ENCODE measurements at regions of chr11 and their contacts with region 1.

Region 1: GRCh38 chr11:88281317-88281712 is 56.2 kb downstream of the CTSC start:
- DNase-seq: no peak
- H3K4me3 ChIP-seq: no peak overlapping the region
- H3K27ac ChIP-seq: no peak overlapping the region
- H3K4me1 ChIP-seq: peaks cover 6% of the 10 kb centered on the region
- H3K27me3 ChIP-seq: no peaks in the 10 kb centered on the region
- CTCF ChIP-seq: peak; percentile 14 to 44

Region 2: DNA sequence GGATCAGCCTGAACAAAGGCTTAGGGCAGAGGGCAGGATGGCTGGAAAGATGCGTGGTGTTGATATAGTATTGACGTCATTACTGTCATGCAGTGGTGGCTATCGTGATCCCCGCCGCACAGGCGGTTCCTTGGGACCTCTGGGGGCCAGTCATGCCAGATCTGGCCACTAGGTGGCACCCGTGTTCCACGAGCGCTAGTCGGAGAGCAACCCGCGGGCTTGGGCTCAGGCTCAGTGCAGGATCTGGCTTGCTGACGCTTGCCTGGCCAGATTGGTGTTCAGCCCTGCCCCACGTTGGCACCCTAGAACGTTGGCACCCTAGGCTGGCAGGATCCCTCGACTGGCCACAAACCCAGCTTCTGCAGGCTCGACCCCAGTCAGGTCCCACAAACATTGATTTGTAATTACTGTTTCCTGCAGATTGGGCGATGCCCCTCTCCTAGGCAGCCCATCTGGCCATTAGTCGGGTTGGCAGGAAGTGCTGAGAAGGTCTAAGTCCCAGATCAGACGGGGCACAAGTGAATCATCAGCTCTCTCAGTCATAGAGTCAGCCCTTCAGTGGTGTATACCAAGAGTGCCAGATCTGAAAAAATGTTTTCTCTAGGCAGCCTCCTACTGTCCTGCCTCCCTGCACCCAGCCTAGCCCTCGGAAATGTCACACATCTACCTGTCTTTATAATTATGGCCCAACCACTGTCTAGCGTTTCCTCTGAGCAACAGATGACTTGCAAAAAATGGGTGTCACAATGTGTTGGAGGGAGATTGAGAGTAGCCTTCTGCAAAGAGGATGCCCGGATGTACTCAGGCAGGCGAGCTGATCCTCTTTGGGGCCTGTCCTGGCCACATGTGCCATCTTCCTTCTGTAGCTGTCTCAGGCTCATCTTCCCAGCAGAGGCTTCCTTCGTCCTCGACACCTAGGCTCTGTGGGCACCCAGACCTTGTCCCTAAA is 928.3 kb before region 1 on chr11:
- CTCF ChIA-PET with region 1: no interaction called
- dilution Hi-C with region 1: no loop called
- in situ Hi-C with region 1: no loop called
- intact Hi-C with region 1: loop called (anchors 5 kb)
- DNase-seq: peak; percentile 78
- H3K4me3 ChIP-seq: peak overlapping the region in 2 of 3 experiments; percentile 13 to 30
- H3K27ac ChIP-seq: no peak overlapping the region
- H3K4me1 ChIP-seq: peaks cover 8% of the 10 kb centered on the region
- H3K27me3 ChIP-seq: no peaks in the 10 kb centered on the region
- CTCF ChIP-seq: peak; percentile 89 to 99

Region 3: GRCh38 chr11:87878373-87878779 is 402.9 kb before region 1 on chr11:
- CTCF ChIA-PET with region 1: no interaction called
- dilution Hi-C with region 1: no loop called
- in situ Hi-C with region 1: no loop called
- intact Hi-C with region 1: loop called (anchors 1 kb)
- DNase-seq: peak; percentile 13
- H3K4me3 ChIP-seq: no peak overlapping the region
- H3K27ac ChIP-seq: no peak overlapping the region
- H3K4me1 ChIP-seq: no peaks in the 10 kb centered on the region
- H3K27me3 ChIP-seq: no peaks in the 10 kb centered on the region
- CTCF ChIP-seq: peak; percentile 59 to 60

Region 4: DNA sequence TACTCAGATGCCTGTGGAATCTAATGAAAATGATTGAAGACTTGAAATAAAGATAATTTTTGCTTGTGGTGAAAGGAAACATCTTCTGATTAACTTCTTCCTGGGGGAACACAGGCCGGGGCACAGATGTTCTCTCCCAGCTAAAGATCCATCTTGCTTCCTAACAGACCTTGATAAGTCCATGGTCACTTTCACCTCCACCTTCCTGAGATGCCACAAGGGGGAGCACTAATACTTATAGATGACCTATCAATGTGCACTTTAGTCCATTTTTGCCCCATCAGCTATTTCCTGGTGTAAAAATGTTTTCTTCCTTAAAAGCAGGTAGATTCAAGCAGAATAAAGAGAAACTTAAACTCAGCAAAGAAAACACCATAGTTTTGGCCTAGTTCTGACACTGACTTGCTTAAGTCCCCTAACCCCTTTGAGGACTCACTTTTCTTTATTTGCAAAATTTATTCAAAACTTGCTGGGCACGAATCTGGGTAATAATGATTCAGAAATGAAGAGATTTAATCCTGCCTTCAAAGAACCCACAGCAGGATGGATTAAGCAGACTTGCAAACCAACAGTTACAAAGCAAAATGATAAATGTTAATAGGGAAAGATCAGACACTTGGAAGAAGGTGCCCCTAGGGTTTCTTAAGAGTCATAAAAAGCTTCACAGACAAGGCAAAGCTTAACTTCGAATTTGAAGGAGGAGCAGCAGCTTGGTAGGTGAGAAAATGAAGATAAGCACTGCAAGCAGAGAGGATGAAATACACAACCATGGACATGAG is 264.7 kb before region 1 on chr11:
- CTCF ChIA-PET with region 1: interaction called, 8 read pairs
- dilution Hi-C with region 1: no loop called
- in situ Hi-C with region 1: loop called (anchors 25 kb)
- intact Hi-C with region 1: loop called (anchors 1 kb)
- DNase-seq: peak; percentile 66
- H3K4me3 ChIP-seq: no peak overlapping the region
- H3K27ac ChIP-seq: no peak overlapping the region
- H3K4me1 ChIP-seq: no peaks in the 10 kb centered on the region
- H3K27me3 ChIP-seq: no peaks in the 10 kb centered on the region
- CTCF ChIP-seq: peak; percentile 79 to 81

Region 5: DNA sequence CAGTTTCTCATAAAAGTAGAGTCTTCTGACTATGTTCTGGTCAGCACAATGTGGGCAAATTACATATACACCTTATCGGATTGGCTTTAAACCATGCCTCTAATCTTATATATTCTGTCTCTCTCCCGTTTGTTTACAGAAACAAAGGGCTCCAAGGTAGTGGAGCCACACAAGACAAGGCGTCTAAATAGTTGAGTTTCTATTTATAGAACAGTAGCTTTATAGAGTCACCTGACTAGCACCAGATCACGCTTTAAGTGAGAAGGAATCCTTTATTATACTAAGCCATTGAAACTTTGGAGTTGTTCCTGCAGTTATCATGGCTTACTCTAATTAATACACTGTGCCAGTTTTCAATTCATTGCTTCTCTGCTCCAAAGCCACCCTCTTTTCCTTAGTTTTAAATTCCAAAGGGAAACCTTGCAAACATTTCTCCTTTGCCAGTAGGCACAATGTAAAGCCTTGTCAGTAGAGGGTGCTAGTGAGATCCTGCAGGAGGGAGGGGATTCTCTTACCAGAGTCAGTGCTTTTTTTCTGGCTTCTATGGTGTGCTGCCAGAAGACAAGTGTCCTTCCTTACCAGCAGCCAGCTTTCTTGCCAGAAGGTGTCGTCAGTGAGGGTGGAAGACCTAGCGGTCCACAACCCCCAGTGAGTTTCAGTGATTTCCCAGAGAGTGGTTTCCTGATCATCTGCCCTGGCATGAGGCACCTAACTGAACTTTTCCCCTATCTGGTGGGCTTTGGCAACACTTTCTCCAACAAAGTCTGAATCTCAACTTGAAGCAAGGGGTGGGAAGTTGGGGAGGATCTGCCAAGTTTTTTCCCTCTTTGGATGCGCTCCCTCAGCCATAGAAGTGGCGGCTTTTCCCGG is 177.7 kb before region 1 on chr11:
- CTCF ChIA-PET with region 1: no interaction called
- dilution Hi-C with region 1: no loop called
- in situ Hi-C with region 1: no loop called
- intact Hi-C with region 1: loop called (anchors 2 kb)
- DNase-seq: peak; percentile 47
- H3K4me3 ChIP-seq: no peak overlapping the region
- H3K27ac ChIP-seq: peak overlapping the region; percentile 54
- H3K4me1 ChIP-seq: peaks cover 14% of the 10 kb centered on the region
- H3K27me3 ChIP-seq: no peaks in the 10 kb centered on the region
- CTCF ChIP-seq: peak; percentile 63 to 81

Measured in mammary epithelial cell (primary cell).